Tibial artery (tissue), 4 donors: ENCODE measurements at regions of chr13 and their contacts with region 1.

Region 1: DNA sequence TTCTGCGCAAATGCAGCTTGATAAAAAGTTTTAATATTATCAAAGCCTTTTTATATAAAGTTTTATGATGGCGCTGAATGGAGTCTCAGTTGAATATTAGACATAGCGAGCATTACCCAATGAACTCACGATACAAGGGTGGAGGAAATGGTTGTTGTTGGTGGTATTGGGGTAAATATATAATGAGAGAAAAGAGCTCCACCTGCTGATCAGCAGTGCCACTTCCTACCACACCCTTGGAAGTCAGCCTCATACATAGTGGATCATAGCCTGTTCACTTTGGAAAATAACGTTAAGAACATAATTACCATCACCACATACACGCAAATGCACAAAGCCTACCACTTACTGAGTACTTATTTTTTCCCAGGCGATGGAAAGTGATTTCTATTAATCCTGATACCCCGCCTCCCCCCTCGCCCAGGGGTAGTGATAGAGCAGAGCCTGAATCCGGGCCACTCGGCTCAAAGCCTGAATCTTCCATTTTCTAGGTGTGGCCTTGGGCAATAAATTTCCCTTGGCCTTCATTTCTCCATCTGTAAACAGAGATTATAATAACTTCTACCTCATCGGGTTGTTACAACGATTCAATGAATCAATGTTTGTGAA is 358.3 kb downstream of the KLF5 start:
- DNase-seq: no peak
- H3K4me3 ChIP-seq: no peak overlapping the region
- H3K27ac ChIP-seq: no peak overlapping the region
- H3K4me1 ChIP-seq: no peaks in the 10 kb centered on the region
- H3K27me3 ChIP-seq: no peaks in the 10 kb centered on the region
- CTCF ChIP-seq: no peak

Region 2: GRCh38 chr13:73387318-73387717 is 29.8 kb before region 1 on chr13:
- intact Hi-C with region 1: loop called (anchors 1 kb)
- DNase-seq: no peak
- H3K4me3 ChIP-seq: no peak overlapping the region
- H3K27ac ChIP-seq: no peak overlapping the region
- H3K4me1 ChIP-seq: no peaks in the 10 kb centered on the region
- H3K27me3 ChIP-seq: no peaks in the 10 kb centered on the region
- CTCF ChIP-seq: no peak